Right ventricle myocardium inferior (tissue), 1 donor: ENCODE measurements at regions of chr2 and their contacts with region 1.

Region 1: DNA sequence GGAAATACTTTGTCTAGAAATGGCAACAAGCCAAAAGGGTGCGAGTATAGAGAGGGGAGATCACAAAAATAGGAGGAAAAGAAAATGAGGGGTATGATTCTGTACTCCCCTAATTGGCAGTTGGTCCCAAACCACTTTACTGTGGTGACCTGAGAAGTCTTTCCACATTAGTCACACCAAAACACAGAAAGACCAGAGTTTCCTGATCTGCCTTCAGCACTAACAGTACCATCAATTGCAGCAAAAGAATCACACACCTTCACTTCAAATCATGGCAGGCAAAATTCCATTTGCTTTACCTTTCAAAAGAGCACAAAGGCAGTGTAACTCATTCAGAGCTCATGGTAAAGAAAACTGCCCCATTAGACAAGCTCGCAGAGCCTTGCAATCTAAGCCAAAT is 86.8 kb downstream of the ALK start:
- DNase-seq: no peak
- ATAC-seq: no peak

Region 2: GRCh38 chr2:29309090-29310029 is 525.3 kb before region 1 on chr2:
- intact Hi-C with region 1: loop called (anchors 5 kb)
- DNase-seq: no peak
- ATAC-seq: peak; percentile 57

Region 3: GRCh38 chr2:29777161-29777560 is 57.5 kb before region 1 on chr2:
- intact Hi-C with region 1: no loop called
- DNase-seq: no peak
- ATAC-seq: no peak

Region 4: GRCh38 chr2:29848566-29849310 is 14.1 kb after region 1 on chr2:
- intact Hi-C with region 1: no loop called
- DNase-seq: no peak
- ATAC-seq: no peak